ENCODE measurements at regions of chr1 and their contacts with region 1.

Region 1: GRCh38 chr1:38964140-38964548 is 22.5 kb upstream of the RHBDL2 start:
- DNase-seq: peak; percentile 38
- ATAC-seq: peak; percentile 75
- H3K4me3 ChIP-seq: no peak overlapping the region
- H3K27ac ChIP-seq: no peak overlapping the region
- H3K4me1 ChIP-seq: peaks cover 59% of the 10 kb centered on the region
- H3K27me3 ChIP-seq: no peaks in the 10 kb centered on the region
- CTCF ChIP-seq: peak; percentile 77
- EP300 ChIP-seq: no peak
- POLR2A ChIP-seq: no peak
- RAD21 ChIP-seq: peak; percentile 63

Region 2: GRCh38 chr1:38891753-38892152 is 72.4 kb before region 1 on chr1:
- CTCF ChIA-PET with region 1: no interaction called
- POLR2A ChIA-PET with region 1: no interaction called
- in situ Hi-C with region 1: no loop called
- intact Hi-C with region 1: loop called (anchors 2 kb)
- DNase-seq: peak; percentile 61
- ATAC-seq: peak; percentile 88
- H3K4me3 ChIP-seq: no peak overlapping the region
- H3K27ac ChIP-seq: no peak overlapping the region
- H3K4me1 ChIP-seq: peaks cover 48% of the 10 kb centered on the region
- H3K27me3 ChIP-seq: no peaks in the 10 kb centered on the region
- CTCF ChIP-seq: peak; percentile 59
- EP300 ChIP-seq: no peak
- POLR2A ChIP-seq: no peak
- RAD21 ChIP-seq: peak; percentile 58; the same call in 1 of the 2 replicates

Region 3: GRCh38 chr1:38941527-38942019 is 22.6 kb before region 1 on chr1 and contains the start of gene RHBDL2:
- CTCF ChIA-PET with region 1: no interaction called
- POLR2A ChIA-PET with region 1: no interaction called
- in situ Hi-C with region 1: no loop called
- intact Hi-C with region 1: loop called (anchors 2 kb)
- DNase-seq: no peak
- ATAC-seq: peak; percentile 63
- H3K4me3 ChIP-seq: peak within 1 kb of the TSS; percentile 56 to 81 (median 75)
- H3K27ac ChIP-seq: peak within 1 kb of the TSS; percentile 72
- H3K4me1 ChIP-seq: peaks cover 80% of the 10 kb centered on the region
- H3K27me3 ChIP-seq: no peaks in the 10 kb centered on the region; a peak in 1 of 5 replicates
- CTCF ChIP-seq: no peak
- EP300 ChIP-seq: no peak
- POLR2A ChIP-seq: no peak
- RAD21 ChIP-seq: no peak
- total RNA-seq, gene RHBDL2: 3.4 and 5.4 TPM in 2 replicates

Region 4: GRCh38 chr1:38953433-38953860 is 10.7 kb before region 1 on chr1:
- CTCF ChIA-PET with region 1: no interaction called
- POLR2A ChIA-PET with region 1: no interaction called
- in situ Hi-C with region 1: no loop called
- intact Hi-C with region 1: no loop called
- DNase-seq: no peak
- ATAC-seq: no peak
- H3K4me3 ChIP-seq: no peak overlapping the region
- H3K27ac ChIP-seq: no peak overlapping the region
- H3K4me1 ChIP-seq: peaks cover 15% of the 10 kb centered on the region
- H3K27me3 ChIP-seq: no peaks in the 10 kb centered on the region
- CTCF ChIP-seq: no peak
- EP300 ChIP-seq: no peak
- POLR2A ChIP-seq: no peak
- RAD21 ChIP-seq: no peak

Measured in HepG2 (cell line).